Gastrocnemius medialis (tissue), 4 donors: ENCODE measurements at regions of chr4 and their contacts with region 1.

Region 1: GRCh38 chr4:781493-782216 is 44.3 kb downstream of the CPLX1 start:
- DNase-seq: peak; percentile 97 to 99
- ATAC-seq: peak; percentile 96 to 97
- H3K4me3 ChIP-seq: peak overlapping the region; percentile 85 to 99 (median 94)
- H3K27ac ChIP-seq: peak overlapping the region; percentile 88 to 94 (median 91)
- H3K4me1 ChIP-seq: peaks cover 13 to 32% of the 10 kb centered on the region in 2 donors
- H3K27me3 ChIP-seq: peaks cover 15 to 17% (median 16%) of the 10 kb centered on the region in 3 donors
- CTCF ChIP-seq: no peak
- POLR2A ChIP-seq: peak; percentile 94 to 97

Region 2: GRCh38 chr4:337143-337931 is 444.3 kb before region 1 on chr4 and contains the start of gene ZNF141:
- in situ Hi-C with region 1: no loop called
- intact Hi-C with region 1: loop called (anchors 5 kb)
- DNase-seq: peak; percentile 94
- ATAC-seq: peak; percentile 98 to 99
- H3K4me3 ChIP-seq: peak within 1 kb of the TSS; percentile 88 to 99 (median 94)
- H3K27ac ChIP-seq: peak within 1 kb of the TSS; percentile 82 to 93 (median 90)
- H3K4me1 ChIP-seq: peaks cover 5 to 9% of the 10 kb centered on the region in 2 donors
- H3K27me3 ChIP-seq: no peaks in the 10 kb centered on the region
- CTCF ChIP-seq: no peak
- POLR2A ChIP-seq: peak; percentile 69 to 80
- total RNA-seq, gene ZNF141: 1.4 to 5.7 (median 2.0) TPM

Region 3: DNA sequence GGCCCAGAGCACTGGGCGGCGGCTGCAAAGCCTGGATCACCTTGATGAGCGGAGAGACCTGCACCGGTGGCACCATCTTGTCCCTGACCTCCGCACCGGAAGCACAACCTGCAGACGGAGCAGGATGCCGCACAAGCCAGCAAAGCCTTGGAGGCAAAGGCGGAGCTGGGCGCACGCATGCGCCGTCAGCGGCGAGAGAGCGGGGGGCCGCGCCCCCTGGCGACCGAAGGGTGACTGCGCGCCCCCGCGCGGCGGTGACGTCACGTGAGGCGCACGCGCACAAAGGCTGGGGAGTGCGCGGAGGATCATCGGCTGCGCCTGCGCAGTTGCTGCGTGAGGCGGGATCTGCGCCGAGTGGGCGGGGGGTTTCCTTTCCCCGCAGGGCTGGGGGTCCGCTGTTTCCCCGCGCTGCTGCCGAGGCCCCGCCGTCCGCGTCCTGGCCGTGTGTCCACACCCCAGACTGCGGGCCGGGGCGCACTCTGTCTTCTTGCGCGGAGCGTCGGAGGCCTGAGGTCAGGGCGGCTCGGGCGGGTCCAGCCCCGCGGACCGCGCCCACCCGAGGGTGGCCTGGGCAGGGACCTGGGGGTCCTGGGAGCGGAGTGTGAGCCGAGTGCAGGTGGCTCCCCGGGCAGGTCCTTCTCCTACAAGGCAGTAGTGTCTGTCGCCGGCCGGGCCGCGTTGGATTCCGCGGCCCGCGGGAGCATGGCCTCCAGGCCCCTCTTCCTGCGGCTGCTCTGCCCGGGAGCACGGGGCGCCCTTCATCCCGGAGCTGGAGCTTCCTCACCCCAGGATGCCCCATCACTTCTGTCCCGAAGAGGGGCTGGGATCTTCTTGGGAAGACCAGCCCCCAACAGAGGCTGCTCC is 107.3 kb before region 1 on chr4 and contains the starts of genes ATP5ME and MYL5:
- in situ Hi-C with region 1: loop called in 1 of 4 experiments (anchors 10 kb)
- intact Hi-C with region 1: loop called (anchors 1 kb)
- DNase-seq: peak; percentile 94 to 96
- ATAC-seq: peak; percentile 91 to 94
- H3K4me3 ChIP-seq: peak within 1 kb of the TSS; percentile 88 to 99 (median 98)
- H3K27ac ChIP-seq: peak within 1 kb of the TSS; percentile 90 to 99 (median 97)
- H3K4me1 ChIP-seq: peaks cover 31 to 48% of the 10 kb centered on the region in 2 donors
- H3K27me3 ChIP-seq: peaks cover 0 to 5% (median 0%) of the 10 kb centered on the region in 3 donors
- CTCF ChIP-seq: peak; percentile 79 to 97 (median 88)
- POLR2A ChIP-seq: peak; percentile 79 to 93
- total RNA-seq, gene ATP5ME: 24.7 to 172 (median 91.5) TPM
- total RNA-seq, gene MYL5: 1.3 to 20.3 (median 3.6) TPM

Region 4: DNA sequence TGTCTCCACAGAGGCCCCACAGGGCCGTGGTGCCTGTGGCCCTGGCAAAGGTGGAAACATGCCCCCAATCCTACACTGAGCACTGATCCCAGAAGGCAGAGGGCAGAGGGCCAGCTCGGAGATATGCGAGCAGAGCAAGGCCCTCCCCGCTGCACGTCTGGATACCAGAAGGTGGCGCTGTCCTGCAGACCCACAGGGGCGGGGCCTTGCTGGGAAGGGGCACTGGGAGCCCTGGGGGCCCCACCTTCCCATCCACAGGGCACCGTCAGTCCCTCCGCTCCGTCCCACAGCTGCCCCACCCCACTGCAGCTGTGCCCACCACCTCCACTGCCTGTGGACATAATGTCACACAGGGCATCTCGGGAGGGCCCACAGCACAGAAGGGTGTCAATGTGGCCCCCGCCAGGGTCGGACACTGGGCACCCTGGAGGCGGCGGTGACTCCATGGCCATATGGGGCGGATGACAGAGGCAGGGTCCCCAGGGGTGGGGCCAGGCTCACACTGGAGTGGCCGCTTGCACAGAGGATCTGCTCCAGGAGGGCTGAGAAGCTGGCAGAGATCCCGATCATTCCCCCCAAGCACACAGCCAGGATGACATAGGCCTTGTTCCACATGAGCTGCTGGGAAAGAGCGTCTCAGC is 97.6 kb before region 1 on chr4:
- in situ Hi-C with region 1: loop called in 1 of 4 experiments (anchors 10 kb)
- intact Hi-C with region 1: loop called (anchors 1 kb)
- DNase-seq: peak in 1 of 2 donors; percentile 64
- ATAC-seq: peak in 1 of 2 donors; percentile 14
- H3K4me3 ChIP-seq: no peak overlapping the region
- H3K27ac ChIP-seq: no peak overlapping the region
- H3K4me1 ChIP-seq: peaks cover 17 to 30% of the 10 kb centered on the region in 2 donors
- H3K27me3 ChIP-seq: peaks cover 0 to 19% (median 6%) of the 10 kb centered on the region in 3 donors
- CTCF ChIP-seq: peak; percentile 46 to 71 (median 62)
- POLR2A ChIP-seq: no peak

Region 5: DNA sequence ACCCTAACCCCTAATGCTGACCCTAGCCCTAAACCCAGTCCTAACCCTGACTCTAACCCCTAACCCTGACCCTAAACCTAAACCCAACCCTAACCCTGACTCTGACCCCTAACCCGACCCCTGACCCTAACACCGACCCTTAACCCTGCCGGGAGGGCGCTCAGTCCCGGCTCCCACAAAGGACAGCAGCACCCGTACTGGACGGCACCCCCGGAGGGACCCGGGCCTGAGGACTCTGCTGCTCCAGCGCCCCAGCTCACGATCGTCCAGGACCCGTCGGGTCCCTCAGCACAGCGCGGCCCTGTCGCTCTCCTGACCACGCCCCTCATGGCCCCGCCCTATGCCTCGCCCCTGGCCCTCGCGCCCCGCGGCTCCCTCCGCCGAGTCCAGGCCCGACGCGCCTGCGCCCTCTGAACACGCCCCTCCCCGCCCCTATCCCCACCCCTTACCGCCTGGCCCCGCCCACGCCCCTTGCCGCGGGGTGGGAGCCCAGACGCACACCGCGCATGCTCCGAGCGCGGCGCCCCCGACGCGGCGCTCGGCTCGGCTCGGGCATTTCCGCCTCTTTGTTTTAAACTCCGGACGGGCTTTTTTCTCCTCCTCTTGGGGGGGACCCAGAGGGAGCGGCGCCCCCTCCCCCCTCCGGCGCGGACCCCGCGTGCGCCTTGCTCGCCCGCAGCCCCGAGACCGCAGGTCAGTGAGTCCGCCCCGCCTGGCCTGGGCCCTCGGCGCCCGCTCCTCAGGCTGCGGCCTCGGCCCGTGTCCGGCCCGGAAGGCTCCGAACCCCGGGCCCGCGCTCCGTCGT is 76.2 kb before region 1 on chr4 and contains the start of gene PCGF3:
- in situ Hi-C with region 1: no loop called
- intact Hi-C with region 1: loop called (anchors 2 kb)
- DNase-seq: peak; percentile 95
- ATAC-seq: peak; percentile 96 to 98
- H3K4me3 ChIP-seq: peak within 1 kb of the TSS; percentile 79 to 97 (median 87)
- H3K27ac ChIP-seq: peak within 1 kb of the TSS; percentile 67 to 92 (median 84)
- H3K4me1 ChIP-seq: peaks cover 21 to 27% of the 10 kb centered on the region in 2 donors
- H3K27me3 ChIP-seq: no peaks in the 10 kb centered on the region
- CTCF ChIP-seq: no peak
- POLR2A ChIP-seq: peak; percentile 65 to 81
- total RNA-seq, gene PCGF3: 14.5 to 31.9 (median 21.6) TPM

Region 6: GRCh38 chr4:1011022-1011694 is 229.5 kb after region 1 on chr4 and contains the start of gene FGFRL1:
- in situ Hi-C with region 1: no loop called
- intact Hi-C with region 1: loop called (anchors 2 kb)
- DNase-seq: peak; percentile 87 to 88
- ATAC-seq: peak; percentile 62 to 63
- H3K4me3 ChIP-seq: peak within 1 kb of the TSS; percentile 63 to 97 (median 74)
- H3K27ac ChIP-seq: peak within 1 kb of the TSS; percentile 50 to 64 (median 62)
- H3K4me1 ChIP-seq: peaks cover 7 to 19% of the 10 kb centered on the region in 2 donors
- H3K27me3 ChIP-seq: peaks cover 19 to 23% (median 20%) of the 10 kb centered on the region in 3 donors
- CTCF ChIP-seq: no peak
- POLR2A ChIP-seq: peak in 1 of 2 donors; percentile 10
- total RNA-seq, gene FGFRL1: 10.4 to 32.4 (median 15.2) TPM